ENCODE measurements at regions of chr21 and their contacts with region 1.

Region 1: DNA sequence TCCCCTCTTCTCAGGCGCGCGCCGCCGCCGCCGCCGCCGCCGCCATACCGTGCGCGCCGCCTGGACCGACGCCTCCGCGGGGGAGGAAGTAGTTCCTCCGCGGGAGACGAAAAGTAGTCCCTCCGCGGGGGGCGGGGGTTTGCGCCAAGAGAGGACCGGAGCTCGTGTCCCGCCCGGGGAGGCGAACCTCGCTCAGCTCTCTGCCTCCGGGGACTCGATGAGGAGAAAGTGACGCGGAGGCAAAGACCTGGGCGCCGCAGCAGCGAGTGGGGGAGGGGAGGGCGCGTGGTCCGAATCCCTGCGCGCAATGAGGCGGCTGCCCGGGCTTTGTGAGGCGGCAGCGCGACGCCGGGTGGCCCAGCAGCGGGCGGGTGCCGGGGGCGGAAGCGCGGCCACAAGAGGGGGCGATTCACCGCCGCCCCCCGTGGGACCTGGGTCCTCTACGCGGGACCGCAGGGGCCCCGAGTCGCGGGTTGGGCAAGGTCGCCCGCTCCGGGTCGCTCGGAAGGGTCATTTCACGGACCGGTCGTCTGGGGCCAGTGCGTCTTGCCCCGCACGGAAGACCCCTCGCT is at the start of gene BRWD1:
- DNase-seq: peak; percentile 61 to 92 (median 80)
- ATAC-seq: peak; percentile 46 to 49
- H3K4me3 Mint-ChIP-seq: peak within 1 kb of the TSS; percentile 91 to 98 (median 94)
- H3K27ac Mint-ChIP-seq: peak within 1 kb of the TSS; percentile 81 to 99 (median 94)
- H3K4me1 Mint-ChIP-seq: peaks cover 24 to 63% (median 47%) of the 10 kb centered on the region in 4 donors
- H3K27me3 Mint-ChIP-seq: peaks cover 0 to 2% (median 0%) of the 10 kb centered on the region in 5 donors
- polyA plus RNA-seq, gene BRWD1: 26.3 to 42.6 (median 36.2) TPM

Region 2: GRCh38 chr21:39183237-39184007 is 130.2 kb before region 1 on chr21 and contains the start of gene PSMG1:
- POLR2A ChIA-PET with region 1: interaction called, 40 read pairs
- DNase-seq: peak; percentile 86 to 95 (median 93)
- ATAC-seq: peak; percentile 88 to 90
- H3K4me3 Mint-ChIP-seq: peak within 1 kb of the TSS; percentile 89 to 99 (median 96)
- H3K27ac Mint-ChIP-seq: peak within 1 kb of the TSS; percentile 83 to 99 (median 96)
- H3K4me1 Mint-ChIP-seq: peaks cover 17 to 50% (median 44%) of the 10 kb centered on the region in 4 donors
- H3K27me3 Mint-ChIP-seq: no peaks in the 10 kb centered on the region
- polyA plus RNA-seq, gene PSMG1: 27.3 to 39.0 (median 36.8) TPM

Region 3: DNA sequence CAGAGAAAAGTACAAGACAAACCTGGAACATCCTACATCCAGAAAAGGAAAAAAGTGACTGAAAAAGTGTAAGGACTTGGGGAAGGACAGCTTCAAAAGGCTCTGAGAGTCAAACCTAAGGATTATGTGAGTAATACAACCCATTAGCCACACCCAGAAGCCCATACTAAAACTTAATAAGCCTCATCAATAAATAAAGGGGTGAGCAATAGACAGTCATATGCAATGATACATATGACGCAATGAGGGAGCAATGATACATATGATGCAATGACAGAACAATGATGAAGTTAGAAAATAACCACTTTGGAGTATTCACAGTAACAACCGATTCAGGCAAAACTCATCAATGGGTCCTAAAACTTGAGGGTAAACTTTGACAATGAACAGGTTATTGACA is 50.3 kb before region 1 on chr21:
- POLR2A ChIA-PET with region 1: no interaction called
- DNase-seq: no peak
- ATAC-seq: no peak
- H3K4me3 Mint-ChIP-seq: no peak overlapping the region
- H3K27ac Mint-ChIP-seq: peak overlapping the region in 2 of 10 donors; percentile 3 to 54
- H3K4me1 Mint-ChIP-seq: peaks cover 2 to 15% (median 6%) of the 10 kb centered on the region in 4 donors
- H3K27me3 Mint-ChIP-seq: no peaks in the 10 kb centered on the region

Region 4: GRCh38 chr21:39296891-39297290 is 16.8 kb before region 1 on chr21:
- POLR2A ChIA-PET with region 1: interaction called, 15 read pairs
- DNase-seq: no peak
- ATAC-seq: no peak
- H3K4me3 Mint-ChIP-seq: peak overlapping the region in 3 of 10 donors; percentile 5 to 24 (median 8)
- H3K27ac Mint-ChIP-seq: peak overlapping the region in 4 of 10 donors; percentile 4 to 75 (median 16)
- H3K4me1 Mint-ChIP-seq: peaks cover 15 to 53% (median 34%) of the 10 kb centered on the region in 4 donors
- H3K27me3 Mint-ChIP-seq: no peaks in the 10 kb centered on the region

Region 5: GRCh38 chr21:39330001-39330400 is 16.3 kb after region 1 on chr21:
- POLR2A ChIA-PET with region 1: interaction called, 13 read pairs
- DNase-seq: no peak
- ATAC-seq: no peak
- H3K4me3 Mint-ChIP-seq: no peak overlapping the region
- H3K27ac Mint-ChIP-seq: no peak overlapping the region
- H3K4me1 Mint-ChIP-seq: no peaks in the 10 kb centered on the region
- H3K27me3 Mint-ChIP-seq: peaks cover 0 to 8% (median 0%) of the 10 kb centered on the region in 5 donors

Region 6: GRCh38 chr21:39349211-39350093 is 35.8 kb after region 1 on chr21:
- POLR2A ChIA-PET with region 1: interaction called, 178 read pairs
- DNase-seq: peak; percentile 93 to 98 (median 97)
- ATAC-seq: peak; percentile 85
- H3K4me3 Mint-ChIP-seq: peak overlapping the region; percentile 91 to 100 (median 96)
- H3K27ac Mint-ChIP-seq: peak overlapping the region; percentile 96 to 100 (median 99)
- H3K4me1 Mint-ChIP-seq: peaks cover 25 to 46% (median 37%) of the 10 kb centered on the region in 4 donors
- H3K27me3 Mint-ChIP-seq: peaks cover 0 to 5% (median 0%) of the 10 kb centered on the region in 5 donors

Region 7: GRCh38 chr21:39379986-39380891 is 66.6 kb after region 1 on chr21:
- POLR2A ChIA-PET with region 1: interaction called, 19 read pairs
- DNase-seq: peak; percentile 78 to 95 (median 86)
- ATAC-seq: peak; percentile 95 to 96
- H3K4me3 Mint-ChIP-seq: peak overlapping the region; percentile 90 to 96 (median 92)
- H3K27ac Mint-ChIP-seq: peak overlapping the region; percentile 28 to 98 (median 94)
- H3K4me1 Mint-ChIP-seq: peaks cover 6 to 28% (median 25%) of the 10 kb centered on the region in 4 donors
- H3K27me3 Mint-ChIP-seq: peaks cover 0 to 6% (median 0%) of the 10 kb centered on the region in 5 donors

Region 8: GRCh38 chr21:39388038-39388810 is 74.6 kb after region 1 on chr21:
- POLR2A ChIA-PET with region 1: interaction called, 30 read pairs
- DNase-seq: peak; percentile 72 to 94 (median 85)
- ATAC-seq: peak; percentile 79 to 81
- H3K4me3 Mint-ChIP-seq: peak overlapping the region; percentile 81 to 93 (median 88)
- H3K27ac Mint-ChIP-seq: peak overlapping the region; percentile 63 to 96 (median 90)
- H3K4me1 Mint-ChIP-seq: peaks cover 15 to 40% (median 33%) of the 10 kb centered on the region in 4 donors
- H3K27me3 Mint-ChIP-seq: no peaks in the 10 kb centered on the region